Right lobe of liver (tissue), 6 donors: ENCODE measurements at regions of chr4 and their contacts with region 1.

Region 1: DNA sequence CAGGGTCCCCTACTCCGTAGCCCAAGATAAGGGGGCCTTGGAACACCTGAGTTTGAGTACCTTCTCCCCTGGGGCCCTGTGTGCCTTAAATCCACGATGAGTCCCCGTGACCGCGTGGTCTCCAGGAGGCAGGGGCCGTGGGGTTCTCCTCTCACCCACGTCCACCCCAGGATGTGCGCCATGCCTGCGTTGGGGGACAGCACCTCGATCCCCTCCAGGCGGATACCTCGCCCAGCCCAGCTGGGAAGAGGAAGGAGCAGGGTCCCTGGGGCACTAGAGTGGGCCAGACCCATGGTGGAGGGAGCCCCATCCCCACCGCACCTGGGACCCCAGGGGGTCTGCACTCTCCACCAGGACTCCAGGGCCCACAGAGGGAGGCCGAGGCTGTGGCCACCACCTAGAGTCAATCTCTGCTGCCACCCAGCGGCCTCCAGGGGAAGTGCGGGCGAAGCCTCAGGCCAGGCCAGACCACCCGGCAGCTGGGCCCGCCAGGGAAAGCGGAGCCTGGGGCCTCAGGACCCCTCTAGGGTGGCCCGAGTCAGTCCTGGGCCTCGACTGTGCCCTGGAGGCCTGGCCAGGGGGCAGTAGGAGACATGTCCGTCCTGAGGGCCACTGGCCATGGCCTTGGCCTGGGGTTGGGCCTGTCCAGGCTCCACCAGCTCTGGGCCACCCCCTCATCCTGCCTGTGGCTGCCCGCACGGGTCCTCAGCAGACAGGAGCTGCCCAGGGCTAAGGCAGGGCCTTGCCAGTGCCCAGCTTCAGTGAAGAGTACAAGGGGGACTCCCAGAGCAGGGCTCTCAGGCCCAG is 55.0 kb downstream of the FAM53A start:
- DNase-seq: peak; percentile 61 to 72 (median 66)
- ATAC-seq: peak; percentile 69 to 89 (median 85)
- H3K4me3 ChIP-seq: no peak overlapping the region
- H3K27ac ChIP-seq: no peak overlapping the region
- H3K4me1 ChIP-seq: no peaks in the 10 kb centered on the region
- H3K27me3 ChIP-seq: no peaks in the 10 kb centered on the region
- CTCF ChIP-seq: peak; percentile 88 to 98 (median 95)
- POLR2A ChIP-seq: no peak

Region 2: DNA sequence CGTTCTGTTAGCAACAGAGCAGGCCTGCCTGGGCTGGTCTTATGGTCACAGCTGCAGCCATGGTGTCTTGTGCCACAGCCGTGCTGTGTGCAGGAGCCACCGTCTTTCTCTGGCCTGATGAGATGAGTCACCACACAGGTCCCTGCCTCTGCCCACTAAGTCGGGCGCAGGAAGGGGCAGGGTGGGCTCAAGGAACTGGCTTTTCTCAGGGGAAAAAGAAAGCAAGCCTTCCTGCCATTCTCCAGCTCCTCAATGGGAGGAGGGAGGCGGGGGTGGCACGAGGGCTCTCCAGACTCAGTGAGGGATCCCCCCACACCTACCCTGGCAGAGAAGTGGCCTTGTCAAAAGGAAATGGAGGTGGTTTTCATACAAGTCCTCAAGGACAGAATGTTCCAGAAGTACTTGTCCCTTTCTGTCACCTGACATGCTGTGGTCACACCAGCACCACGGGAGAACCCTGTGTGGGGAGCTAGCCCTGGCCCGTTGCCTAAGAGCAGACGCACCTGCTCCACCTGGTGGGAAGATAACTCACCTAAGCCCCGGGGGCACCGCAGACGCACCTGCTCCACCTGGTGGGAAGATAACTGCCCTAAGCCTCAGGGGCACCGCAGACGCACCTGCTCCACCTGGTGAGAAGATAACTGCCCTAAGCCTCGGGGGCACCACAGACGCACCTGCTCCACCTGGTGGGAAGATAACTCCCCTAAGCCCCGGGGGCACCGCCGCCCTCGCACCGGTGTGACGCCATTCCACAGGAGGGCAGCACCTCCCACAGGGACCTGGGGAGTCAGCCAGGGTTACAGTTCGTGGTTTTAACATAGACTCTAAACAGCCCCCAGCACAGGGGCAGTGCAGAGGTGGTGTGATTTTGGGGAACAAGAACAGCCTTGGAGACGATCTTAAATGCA is 263.6 kb before region 1 on chr4:
- intact Hi-C with region 1: loop called in 1 of 2 experiments (anchors 10 kb)
- DNase-seq: peak in 2 of 3 donors; percentile 12 to 36
- ATAC-seq: no peak
- H3K4me3 ChIP-seq: no peak overlapping the region
- H3K27ac ChIP-seq: no peak overlapping the region
- H3K4me1 ChIP-seq: peaks cover 0 to 5% (median 2%) of the 10 kb centered on the region in 4 donors
- H3K27me3 ChIP-seq: no peaks in the 10 kb centered on the region
- CTCF ChIP-seq: no peak
- POLR2A ChIP-seq: no peak